Activated CD4-positive, alpha-beta memory T cell treated with anti-CD3 and anti-CD28 coated beads, Interleukin-2, amount 10 ng/mL, durations not matched to agents 7 days and 5 days (primary cell): ENCODE measurements at regions of chr9 and their contacts with region 1.

Region 1: DNA sequence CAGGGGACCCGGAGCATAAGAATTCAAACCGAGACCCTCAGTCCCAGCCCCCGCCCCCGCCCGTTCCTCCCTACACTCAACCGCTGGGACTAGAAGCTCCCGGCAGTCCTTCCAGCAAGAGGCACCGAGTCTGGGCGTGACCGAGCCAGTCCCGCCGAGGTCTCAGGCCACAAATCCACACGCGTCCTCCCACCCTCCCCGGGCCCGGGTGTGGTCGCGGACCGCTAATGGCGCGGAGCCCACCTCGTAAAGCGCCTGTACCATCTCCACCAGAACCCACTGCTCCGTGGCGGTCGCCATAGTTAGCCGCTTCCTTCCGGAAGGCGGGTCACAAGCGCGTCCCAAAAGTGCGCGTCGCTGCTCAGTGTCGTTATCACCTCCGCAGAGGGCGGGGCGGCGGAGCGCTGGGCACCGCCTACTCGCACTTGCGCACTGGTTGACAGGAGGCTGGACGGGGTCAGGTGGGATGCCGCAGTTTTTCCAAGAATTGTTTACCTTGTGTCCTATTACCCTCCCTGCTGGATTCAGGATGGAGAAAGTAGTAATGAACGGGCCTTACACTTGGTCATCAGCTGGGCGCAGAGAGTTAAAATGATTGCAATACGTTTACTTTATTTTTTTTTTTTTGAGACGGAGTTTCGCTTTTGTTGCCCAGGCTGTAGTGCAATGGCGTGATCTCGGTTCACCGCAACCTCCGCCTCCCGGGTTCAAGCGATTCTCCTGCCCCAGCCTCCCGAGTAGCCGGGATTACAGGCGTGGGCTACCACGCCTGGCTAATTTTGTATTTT is at the start of gene SPTLC1:
- DNase-seq: peak; percentile 96
- H3K4me3 Mint-ChIP-seq: peak within 1 kb of the TSS; percentile 98
- H3K27ac Mint-ChIP-seq: peak within 1 kb of the TSS; percentile 99
- H3K4me1 Mint-ChIP-seq: peaks cover 39% of the 10 kb centered on the region
- H3K27me3 Mint-ChIP-seq: peaks cover 2% of the 10 kb centered on the region
- total RNA-seq, gene SPTLC1: 55.1 to 60.9 TPM

Region 2: GRCh38 chr9:92094655-92095054 is 20.6 kb before region 1 on chr9:
- CTCF ChIA-PET with region 1: no interaction called
- POLR2A ChIA-PET with region 1: interaction called, 21 read pairs
- DNase-seq: peak; percentile 47
- H3K4me3 Mint-ChIP-seq: peak overlapping the region; percentile 5
- H3K27ac Mint-ChIP-seq: peak overlapping the region; percentile 81
- H3K4me1 Mint-ChIP-seq: peaks cover 68% of the 10 kb centered on the region
- H3K27me3 Mint-ChIP-seq: no peaks in the 10 kb centered on the region